ENCODE measurements at regions of chr9 and their contacts with region 1.

Region 1: DNA sequence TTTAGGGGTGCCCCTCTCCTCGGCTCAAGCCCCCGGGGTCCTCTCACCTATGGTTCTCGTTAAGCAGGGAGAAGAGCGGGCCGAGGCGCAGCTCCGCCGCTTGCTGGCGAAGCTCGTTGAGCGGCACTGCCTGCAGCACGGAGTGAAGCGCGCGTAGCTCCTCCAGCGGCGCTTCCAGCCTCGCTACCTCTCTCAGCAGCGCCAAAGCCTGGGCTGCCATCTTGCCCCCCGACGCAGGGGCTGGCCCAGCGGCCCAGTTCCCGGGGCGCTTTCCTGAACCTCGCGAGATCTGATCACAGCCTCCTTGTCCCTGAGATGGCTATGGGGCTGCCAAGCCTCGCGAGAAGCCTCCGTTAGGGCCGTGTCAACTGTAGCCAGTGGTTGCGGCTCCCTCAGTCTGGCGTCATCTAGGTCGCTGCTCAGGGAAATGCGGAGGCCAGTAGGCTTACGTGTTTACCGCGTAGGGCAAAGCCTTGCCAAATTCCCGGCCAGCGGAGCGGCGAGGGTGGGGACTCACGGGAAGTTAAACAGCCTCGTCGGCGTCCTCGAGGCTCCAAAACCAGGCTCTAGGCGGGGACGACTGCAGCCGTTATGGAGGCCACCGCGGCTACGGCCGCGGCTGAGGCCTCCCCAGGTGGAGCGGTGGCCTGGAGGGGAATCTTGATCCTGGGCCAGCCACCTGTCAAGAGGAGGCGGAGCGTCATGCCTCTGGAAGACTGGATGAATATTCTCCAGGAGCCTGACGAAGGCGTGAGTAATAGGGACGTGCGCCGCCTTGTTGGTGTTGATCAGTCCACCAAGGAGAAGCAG is at the start of gene PSMD5:
- DNase-seq: peak; percentile 96 to 97
- H3K4me3 ChIP-seq: peak within 1 kb of the TSS; percentile 61 to 67 (median 64)
- H3K27ac ChIP-seq: peak within 1 kb of the TSS; percentile 88 to 96 (median 94)
- H3K4me1 ChIP-seq: peaks cover 15 to 19% of the 10 kb centered on the region in 2 donors
- H3K27me3 ChIP-seq: no peaks in the 10 kb centered on the region
- CTCF ChIP-seq: peak in 1 of 6 experiments; percentile 9
- POLR2A ChIP-seq: peak; percentile 69 to 81
- total RNA-seq, gene PSMD5: 34.8 to 38.6 (median 36.5) TPM

Region 2: DNA sequence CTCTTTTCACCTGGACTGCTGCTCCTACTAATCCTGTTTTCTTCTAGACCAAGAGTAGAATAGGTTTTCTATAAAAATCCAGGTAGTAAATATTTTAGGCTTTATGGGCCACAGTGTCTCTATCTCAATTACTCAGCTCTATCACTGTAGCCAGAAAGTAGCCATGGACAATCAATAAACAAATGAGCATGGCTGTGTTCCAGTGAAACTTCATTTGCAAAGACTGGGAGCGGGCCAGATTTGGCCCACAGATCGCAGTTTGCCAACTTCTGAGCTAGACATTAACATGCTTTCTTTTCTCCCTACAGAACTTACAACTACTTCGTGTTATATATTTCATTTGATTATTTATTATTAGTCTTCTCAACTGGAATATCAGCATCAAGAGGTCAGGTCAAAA is 1503.8 kb before region 1 on chr9:
- intact Hi-C with region 1: no loop called
- DNase-seq: no peak
- H3K4me3 ChIP-seq: no peak overlapping the region
- H3K27ac ChIP-seq: no peak overlapping the region
- H3K4me1 ChIP-seq: no peaks in the 10 kb centered on the region
- H3K27me3 ChIP-seq: no peaks in the 10 kb centered on the region
- CTCF ChIP-seq: no peak
- POLR2A ChIP-seq: no peak

Region 3: DNA sequence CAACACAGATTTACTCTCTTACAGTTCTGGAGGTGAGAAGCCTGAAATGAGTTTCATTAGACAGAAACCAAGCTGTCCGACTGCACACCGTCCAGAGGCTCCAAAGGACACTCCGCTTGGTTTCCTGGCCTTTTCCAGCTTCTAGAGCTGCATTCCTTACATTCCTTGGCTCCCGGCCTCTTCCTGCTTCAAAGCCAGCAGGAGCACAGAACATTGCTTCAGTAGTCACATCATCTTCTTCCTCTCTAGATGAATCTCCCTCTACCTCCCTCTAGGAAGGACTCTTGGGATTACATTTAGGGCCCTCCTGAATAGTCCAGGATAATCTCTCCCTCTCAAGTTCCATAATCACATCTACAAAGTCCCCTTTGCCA is 476.3 kb before region 1 on chr9:
- intact Hi-C with region 1: no loop called
- DNase-seq: peak; percentile 74 to 87
- H3K4me3 ChIP-seq: no peak overlapping the region
- H3K27ac ChIP-seq: peak overlapping the region; percentile 2 to 73 (median 24)
- H3K4me1 ChIP-seq: peaks cover 0 to 7% of the 10 kb centered on the region in 2 donors
- H3K27me3 ChIP-seq: no peaks in the 10 kb centered on the region
- CTCF ChIP-seq: peak in 3 of 6 experiments; percentile 29 to 60 (median 36)
- POLR2A ChIP-seq: no peak

Region 4: GRCh38 chr9:120792898-120793765 is 49.8 kb before region 1 on chr9 and contains the start of gene FBXW2:
- intact Hi-C with region 1: loop called (anchors 10 kb)
- DNase-seq: peak; percentile 91 to 93
- H3K4me3 ChIP-seq: peak within 1 kb of the TSS; percentile 81 to 94 (median 91)
- H3K27ac ChIP-seq: peak within 1 kb of the TSS; percentile 34 to 89 (median 81)
- H3K4me1 ChIP-seq: peaks cover 15 to 22% of the 10 kb centered on the region in 2 donors
- H3K27me3 ChIP-seq: no peaks in the 10 kb centered on the region
- CTCF ChIP-seq: peak in 2 of 6 experiments; percentile 17 to 21
- POLR2A ChIP-seq: peak; percentile 8 to 89
- total RNA-seq, gene FBXW2: 46.9 to 54.8 (median 50.1) TPM